ENCODE measurements at regions of chr3 and their contacts with region 1.

Region 1: DNA sequence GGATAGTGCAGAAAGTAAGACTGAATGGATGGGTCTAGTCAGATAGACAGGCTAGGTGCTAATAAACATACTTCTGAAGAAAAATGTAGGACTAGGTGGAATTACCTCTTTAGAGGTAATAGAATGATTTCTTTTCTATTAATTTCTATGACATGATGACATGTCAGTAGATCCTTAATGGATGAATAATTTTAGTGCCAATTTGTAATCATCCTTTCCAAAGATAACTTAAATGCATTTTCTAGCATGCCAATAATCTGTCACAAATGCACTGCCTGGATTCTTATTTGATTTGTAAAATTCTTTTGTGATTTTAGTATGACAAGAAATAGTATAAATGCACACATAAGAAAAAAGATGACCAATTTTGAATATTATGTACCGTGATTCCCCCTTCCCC is 356.7 kb downstream of the NAALADL2 start:
- DNase-seq: no peak

Region 2: DNA sequence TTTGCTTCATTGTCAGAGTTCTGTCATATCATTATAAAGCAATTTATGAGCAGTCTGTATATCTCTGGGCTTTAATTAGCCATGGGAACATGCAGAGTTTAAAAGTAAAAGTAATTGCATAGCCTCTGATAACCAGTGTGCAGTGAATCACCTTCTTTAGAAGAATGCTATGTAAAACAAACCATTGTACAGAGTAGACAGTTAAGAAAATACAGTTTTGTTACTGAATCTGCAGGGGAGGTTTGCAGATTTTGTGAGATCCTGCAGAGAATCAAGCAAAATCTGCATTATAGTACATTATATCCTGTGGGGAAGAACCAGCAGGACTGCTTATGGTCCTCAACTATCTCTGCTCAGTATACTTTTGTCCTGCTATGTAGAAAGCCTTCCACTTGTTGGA is 752.9 kb before region 1 on chr3:
- intact Hi-C with region 1: no loop called
- DNase-seq: no peak

Region 3: DNA sequence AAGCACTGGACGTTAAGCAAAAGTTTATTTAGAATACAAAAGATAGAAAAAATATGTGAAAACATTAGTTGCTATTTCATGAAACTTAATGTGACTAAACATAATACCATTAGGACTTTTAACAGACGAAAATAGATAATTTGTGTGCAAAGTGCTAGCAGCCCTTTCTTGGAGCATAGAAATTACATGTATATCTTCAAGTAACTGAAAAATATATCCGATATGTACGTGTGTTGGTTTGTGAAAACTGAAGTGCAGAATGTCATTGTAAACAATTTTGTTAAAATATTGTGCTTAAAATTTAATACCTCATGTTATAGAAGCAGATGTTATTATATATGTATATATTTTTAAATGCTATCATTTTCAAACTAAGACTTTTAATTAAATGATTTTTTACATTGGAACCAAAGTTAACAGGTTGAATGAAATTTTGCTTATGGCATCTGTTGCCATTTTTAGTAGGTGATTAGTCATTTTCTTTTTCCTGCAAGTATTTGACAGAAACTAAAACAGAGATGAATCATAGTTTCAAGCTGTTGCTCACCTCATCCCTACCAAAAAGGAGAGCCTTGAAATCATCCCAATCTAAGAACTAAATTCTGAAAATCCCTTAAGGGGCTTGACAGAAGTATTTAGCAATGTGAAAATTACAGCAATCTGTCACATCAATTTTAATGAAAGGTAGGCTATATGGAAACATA is 21.9 kb before region 1 on chr3:
- intact Hi-C with region 1: no loop called
- DNase-seq: no peak

Region 4: DNA sequence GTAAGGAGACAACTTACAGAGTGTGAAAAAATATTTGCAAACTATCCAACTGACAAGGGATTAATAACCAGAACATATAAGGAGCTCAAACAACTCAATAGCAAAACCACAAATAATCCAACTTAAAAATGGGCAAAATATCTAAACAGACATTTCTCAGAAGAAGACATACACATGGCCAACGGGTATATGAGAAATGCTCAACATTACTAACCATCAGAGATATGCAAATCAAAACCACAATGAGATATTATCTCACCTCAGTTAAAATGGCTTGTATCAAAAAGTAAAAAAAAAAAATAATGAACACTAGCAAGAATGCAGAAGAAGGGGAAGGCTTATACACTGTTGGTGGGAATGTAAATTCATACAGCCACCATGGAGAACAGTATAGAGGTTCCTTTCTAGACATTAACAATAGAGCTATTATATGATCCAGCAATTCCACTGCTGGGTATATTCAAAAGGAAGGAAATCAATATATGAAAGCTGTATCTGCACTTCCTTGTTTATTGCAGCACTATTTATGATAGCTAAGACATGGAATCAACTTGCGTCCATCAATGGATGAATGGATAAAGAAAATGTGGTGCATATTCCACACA is 641.9 kb after region 1 on chr3:
- intact Hi-C with region 1: loop called in 1 of 2 experiments (anchors 5 kb)
- DNase-seq: no peak

Measured in posterior vena cava (tissue), 2 donors.